ENCODE measurements at regions of chr16 and their contacts with region 1.

Region 1: GRCh38 chr16:9090960-9091866 is at the start of gene HAPSTR1:
- H3K4me3 Mint-ChIP-seq: peak within 1 kb of the TSS; percentile 91
- H3K27ac Mint-ChIP-seq: peak within 1 kb of the TSS; percentile 99
- H3K4me1 Mint-ChIP-seq: peaks cover 31% of the 10 kb centered on the region
- H3K27me3 Mint-ChIP-seq: no peaks in the 10 kb centered on the region

Region 2: GRCh38 chr16:8963825-8964441 is 127.3 kb before region 1 on chr16 and contains the start of gene USP7:
- intact Hi-C with region 1: loop called (anchors 5 kb)
- H3K4me3 Mint-ChIP-seq: peak within 1 kb of the TSS; percentile 86
- H3K27ac Mint-ChIP-seq: peak within 1 kb of the TSS; percentile 84
- H3K4me1 Mint-ChIP-seq: peaks cover 61% of the 10 kb centered on the region
- H3K27me3 Mint-ChIP-seq: no peaks in the 10 kb centered on the region

Region 3: GRCh38 chr16:9047686-9048301 is 43.4 kb before region 1 on chr16:
- intact Hi-C with region 1: loop called (anchors 5 kb)
- H3K4me3 Mint-ChIP-seq: peak overlapping the region; percentile 30
- H3K27ac Mint-ChIP-seq: peak overlapping the region; percentile 78
- H3K4me1 Mint-ChIP-seq: peaks cover 26% of the 10 kb centered on the region
- H3K27me3 Mint-ChIP-seq: peaks cover 12% of the 10 kb centered on the region

Region 4: DNA sequence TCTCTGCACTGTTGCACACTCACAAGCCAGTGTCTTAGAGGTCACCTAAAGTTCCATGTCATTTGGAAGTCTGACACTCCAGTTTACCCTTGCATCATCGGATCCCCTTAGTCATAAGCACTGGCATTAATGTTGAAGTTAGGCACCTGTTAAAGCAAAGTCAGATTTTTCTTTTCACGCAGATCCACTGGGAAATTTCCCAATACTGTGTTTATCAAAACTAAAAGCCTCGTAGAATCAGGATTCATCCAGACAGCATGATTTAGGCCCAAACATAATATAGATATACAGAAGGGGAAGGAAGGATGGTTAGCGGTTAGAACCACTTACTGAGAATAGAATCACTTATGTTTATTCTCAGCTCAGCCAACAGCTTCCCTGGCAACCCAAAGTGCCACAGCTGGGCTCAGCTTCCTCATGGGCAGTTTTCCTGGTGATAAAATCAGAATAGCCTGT is 29.8 kb before region 1 on chr16:
- intact Hi-C with region 1: no loop called
- H3K4me3 Mint-ChIP-seq: peak overlapping the region; percentile 26
- H3K27ac Mint-ChIP-seq: peak overlapping the region; percentile 94
- H3K4me1 Mint-ChIP-seq: peaks cover 23% of the 10 kb centered on the region
- H3K27me3 Mint-ChIP-seq: no peaks in the 10 kb centered on the region

Region 5: DNA sequence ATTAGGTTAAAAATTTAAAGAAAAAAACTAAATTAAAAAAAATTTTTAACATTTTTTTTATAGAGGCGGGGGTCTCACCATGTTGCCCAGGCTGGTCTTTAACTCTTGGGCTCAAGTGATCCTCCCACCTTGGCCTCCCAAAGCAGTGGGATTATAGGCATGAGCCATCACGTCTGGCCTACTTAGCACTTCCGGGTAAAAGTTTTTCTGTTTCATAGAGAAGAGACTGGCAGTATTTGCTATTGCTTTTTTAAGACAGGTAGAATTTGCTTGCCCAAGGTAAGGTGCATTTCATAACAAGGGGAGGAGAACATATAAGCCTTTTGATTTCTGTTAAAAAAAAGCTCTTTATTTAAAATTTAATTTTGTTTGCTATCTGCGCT is 11.8 kb before region 1 on chr16:
- intact Hi-C with region 1: loop called (anchors 1 kb)
- H3K4me3 Mint-ChIP-seq: no peak overlapping the region
- H3K27ac Mint-ChIP-seq: peak overlapping the region; percentile 22
- H3K4me1 Mint-ChIP-seq: peaks cover 35% of the 10 kb centered on the region
- H3K27me3 Mint-ChIP-seq: no peaks in the 10 kb centered on the region

Region 6: GRCh38 chr16:9124908-9125584 is 33.8 kb after region 1 on chr16:
- intact Hi-C with region 1: loop called (anchors 5 kb)
- H3K4me3 Mint-ChIP-seq: no peak overlapping the region
- H3K27ac Mint-ChIP-seq: no peak overlapping the region
- H3K4me1 Mint-ChIP-seq: peaks cover 69% of the 10 kb centered on the region
- H3K27me3 Mint-ChIP-seq: no peaks in the 10 kb centered on the region

Measured in dendritic cell treated with granulocyte-macrophage colony-stimulating factor and Interleukin-4, amounts not matched to agents 40 ng/mL and 50 ng/mL, for 4 days (primary cell).